Ovary (tissue), 10 donors: ENCODE measurements at regions of chr12 and their contacts with region 1.

Region 1: GRCh38 chr12:82144505-82144904 is 213.7 kb downstream of the CCDC59 start:
- DNase-seq: no peak
- H3K4me3 ChIP-seq: no peak overlapping the region
- H3K27ac ChIP-seq: no peak overlapping the region
- H3K4me1 ChIP-seq: no peaks in the 10 kb centered on the region
- H3K27me3 ChIP-seq: no peaks in the 10 kb centered on the region
- CTCF ChIP-seq: no peak
- EP300 ChIP-seq: no peak
- POLR2A ChIP-seq: no peak

Region 2: DNA sequence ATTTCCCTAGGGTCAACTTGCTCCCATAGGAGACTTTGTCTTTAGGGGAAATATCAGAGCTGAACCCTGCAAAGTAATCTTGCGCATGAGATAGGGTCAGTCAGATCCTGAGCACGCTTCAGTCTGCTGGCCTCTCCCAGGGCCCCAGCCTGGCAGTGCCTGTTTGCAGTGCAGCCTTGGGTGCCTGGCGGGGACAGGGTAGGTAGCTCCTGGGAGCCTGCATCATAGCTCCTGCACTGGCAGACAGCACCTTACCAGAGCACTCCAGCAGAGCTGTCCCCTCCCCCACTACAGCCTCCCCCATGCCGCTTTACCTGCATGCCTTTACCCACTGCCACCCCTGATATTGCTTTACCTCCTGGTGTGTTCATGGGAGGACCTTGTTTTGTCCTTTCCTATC is 23.6 kb before region 1 on chr12:
- intact Hi-C with region 1: loop called in 1 of 4 experiments (anchors 2 kb)
- DNase-seq: no peak
- H3K4me3 ChIP-seq: no peak overlapping the region
- H3K27ac ChIP-seq: no peak overlapping the region
- H3K4me1 ChIP-seq: no peaks in the 10 kb centered on the region
- H3K27me3 ChIP-seq: no peaks in the 10 kb centered on the region
- CTCF ChIP-seq: no peak
- EP300 ChIP-seq: no peak
- POLR2A ChIP-seq: no peak